Transverse colon (tissue), 4 donors: ENCODE measurements at regions of chr11 and their contacts with region 1.

Region 1: DNA sequence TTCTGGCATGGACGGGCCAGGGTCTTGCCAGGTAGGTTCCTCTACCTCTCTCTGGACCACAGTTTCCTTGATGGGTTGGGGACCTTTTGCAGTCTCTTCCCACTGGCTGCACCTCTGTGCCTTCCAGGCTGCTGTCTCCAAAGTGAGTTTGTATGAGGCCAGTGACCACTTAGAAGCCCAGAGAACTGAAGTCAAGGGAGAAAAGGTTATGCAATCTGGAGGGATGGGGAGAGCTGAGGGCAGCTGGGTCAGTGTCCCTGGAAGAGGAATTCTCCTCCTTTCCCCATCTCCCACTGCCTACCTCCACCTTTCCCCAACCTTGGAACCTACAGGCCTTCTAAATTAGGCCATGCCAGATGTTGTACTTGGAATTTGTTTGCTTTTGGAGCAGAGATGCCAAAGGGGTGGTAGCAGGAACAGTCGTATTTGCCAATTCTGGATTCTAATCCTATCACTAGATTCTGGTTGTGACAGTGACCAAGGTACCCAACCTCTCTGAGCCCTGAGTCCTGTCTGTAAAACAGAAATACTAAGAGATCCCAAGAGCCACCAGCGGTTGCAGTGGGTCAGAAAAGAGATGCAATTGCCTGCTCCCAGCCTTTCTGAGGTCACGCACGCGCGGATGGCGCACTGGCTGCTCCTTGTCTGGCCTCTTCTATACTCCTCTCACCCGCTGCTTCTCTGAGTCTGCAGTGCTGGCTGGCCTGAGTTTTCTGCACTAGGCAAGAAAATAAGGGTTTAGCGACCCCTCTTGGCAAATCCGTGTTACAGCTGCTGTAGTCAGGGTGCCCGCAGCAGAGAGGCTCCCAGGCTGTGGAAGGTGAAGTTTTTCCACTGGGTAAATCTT is 10.7 kb upstream of the ACCSL start:
- DNase-seq: peak; percentile 62
- H3K4me3 ChIP-seq: no peak overlapping the region
- H3K27ac ChIP-seq: peak overlapping the region in 1 of 4 donors; percentile 9
- H3K4me1 ChIP-seq: peaks cover 0 to 2% (median 0%) of the 10 kb centered on the region in 4 donors
- H3K27me3 ChIP-seq: no peaks in the 10 kb centered on the region
- CTCF ChIP-seq: peak; percentile 57 to 69 (median 65)
- EP300 ChIP-seq: no peak
- POLR2A ChIP-seq: no peak

Region 2: GRCh38 chr11:43680521-43681400 is 356.3 kb before region 1 on chr11 and contains the start of gene HSD17B12:
- in situ Hi-C with region 1: no loop called
- intact Hi-C with region 1: loop called (anchors 10 kb)
- DNase-seq: peak; percentile 99
- H3K4me3 ChIP-seq: peak within 1 kb of the TSS; percentile 46 to 92 (median 71)
- H3K27ac ChIP-seq: peak within 1 kb of the TSS; percentile 87 to 98 (median 93)
- H3K4me1 ChIP-seq: peaks cover 0 to 29% (median 14%) of the 10 kb centered on the region in 4 donors
- H3K27me3 ChIP-seq: no peaks in the 10 kb centered on the region
- CTCF ChIP-seq: peak in 2 of 5 experiments; percentile 5 to 12
- EP300 ChIP-seq: no peak
- POLR2A ChIP-seq: peak; percentile 97
- total RNA-seq, gene HSD17B12: 33.3 to 65.7 (median 47.1) TPM

Region 3: DNA sequence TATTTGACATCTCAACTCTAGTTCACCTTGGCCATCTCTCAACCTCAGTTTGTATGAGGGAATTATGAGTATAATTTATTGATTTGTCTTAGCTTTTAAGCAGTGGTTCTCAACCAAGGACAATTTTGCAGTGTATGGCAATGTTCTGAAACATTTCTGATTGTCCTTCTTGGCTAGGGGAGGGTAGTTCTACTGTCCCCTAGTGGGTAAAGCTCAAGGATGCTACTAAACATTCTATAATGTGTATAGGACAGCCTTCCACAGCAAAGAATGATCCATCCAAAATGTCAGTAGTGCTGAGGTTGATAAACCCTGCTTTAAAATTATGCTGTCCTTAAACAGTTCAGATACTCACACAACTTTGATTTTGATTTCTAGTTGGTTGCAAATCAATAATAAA is 234.5 kb before region 1 on chr11:
- in situ Hi-C with region 1: no loop called
- intact Hi-C with region 1: no loop called
- DNase-seq: no peak
- H3K4me3 ChIP-seq: no peak overlapping the region
- H3K27ac ChIP-seq: no peak overlapping the region
- H3K4me1 ChIP-seq: peaks cover 0 to 5% (median under 1%) of the 10 kb centered on the region in 4 donors
- H3K27me3 ChIP-seq: no peaks in the 10 kb centered on the region
- CTCF ChIP-seq: no peak
- EP300 ChIP-seq: no peak
- POLR2A ChIP-seq: no peak

Region 4: GRCh38 chr11:43895601-43896000 is 141.4 kb before region 1 on chr11:
- in situ Hi-C with region 1: loop called in 1 of 4 experiments (anchors 10 kb)
- intact Hi-C with region 1: loop called (anchors 5 kb)
- DNase-seq: no peak
- H3K4me3 ChIP-seq: no peak overlapping the region
- H3K27ac ChIP-seq: no peak overlapping the region
- H3K4me1 ChIP-seq: no peaks in the 10 kb centered on the region
- H3K27me3 ChIP-seq: no peaks in the 10 kb centered on the region
- CTCF ChIP-seq: no peak
- EP300 ChIP-seq: no peak
- POLR2A ChIP-seq: no peak